H1 (cell line): ENCODE measurements at regions of chr2 and their contacts with region 1.

Region 1: GRCh38 chr2:233053928-233054784 is 6.0 kb upstream of the INPP5D start:
- DNase-seq: peak; percentile 41 to 94
- H3K4me3 ChIP-seq: no peak overlapping the region
- H3K27ac ChIP-seq: no peak overlapping the region
- H3K4me1 ChIP-seq: peaks cover 10 to 16% (median 14%) of the 10 kb centered on the region in 4 experiments
- H3K27me3 ChIP-seq: no peaks in the 10 kb centered on the region; a peak in 1 of 7 replicates
- CTCF ChIP-seq: peak; percentile 92 to 94 (median 93)
- EP300 ChIP-seq: no peak
- POLR2A ChIP-seq: no peak
- RAD21 ChIP-seq: peak; percentile 77 to 89

Region 2: GRCh38 chr2:232761301-232761907 is 292.8 kb before region 1 on chr2:
- CTCF ChIA-PET with region 1: no interaction called
- POLR2A ChIA-PET with region 1: no interaction called
- DNase-seq: no peak
- H3K4me3 ChIP-seq: no peak overlapping the region
- H3K27ac ChIP-seq: no peak overlapping the region
- H3K4me1 ChIP-seq: no peaks in the 10 kb centered on the region
- H3K27me3 ChIP-seq: no peaks in the 10 kb centered on the region
- CTCF ChIP-seq: peak in 2 of 3 experiments; percentile 30 to 36; a peak in 2 of 4 replicates
- EP300 ChIP-seq: no peak
- POLR2A ChIP-seq: no peak
- RAD21 ChIP-seq: peak; percentile 35 to 46

Region 3: GRCh38 chr2:232887171-232887850 is 166.8 kb before region 1 on chr2:
- CTCF ChIA-PET with region 1: interaction called, 12 read pairs
- POLR2A ChIA-PET with region 1: no interaction called
- DNase-seq: no peak
- H3K4me3 ChIP-seq: no peak overlapping the region
- H3K27ac ChIP-seq: no peak overlapping the region
- H3K4me1 ChIP-seq: peaks cover 0 to 16% (median 10%) of the 10 kb centered on the region in 4 experiments; a peak in 6 of 7 replicates
- H3K27me3 ChIP-seq: no peaks in the 10 kb centered on the region
- CTCF ChIP-seq: peak in 2 of 3 experiments; percentile 67 to 70; a peak in 3 of 4 replicates
- EP300 ChIP-seq: no peak
- POLR2A ChIP-seq: no peak
- RAD21 ChIP-seq: peak; percentile 63 to 78

Region 4: GRCh38 chr2:232999354-232999753 is 54.8 kb before region 1 on chr2:
- CTCF ChIA-PET with region 1: interaction called, 12 read pairs
- POLR2A ChIA-PET with region 1: no interaction called
- DNase-seq: no peak
- H3K4me3 ChIP-seq: no peak overlapping the region
- H3K27ac ChIP-seq: no peak overlapping the region
- H3K4me1 ChIP-seq: no peaks in the 10 kb centered on the region; a peak in 1 of 7 replicates
- H3K27me3 ChIP-seq: no peaks in the 10 kb centered on the region
- CTCF ChIP-seq: peak; percentile 9 to 52 (median 42); a peak in 3 of 4 replicates
- EP300 ChIP-seq: no peak
- POLR2A ChIP-seq: no peak
- RAD21 ChIP-seq: peak in 1 of 2 experiments; percentile 30; a peak in 2 of 4 replicates

Region 5: GRCh38 chr2:233033672-233034071 is 20.5 kb before region 1 on chr2:
- CTCF ChIA-PET with region 1: interaction called, 47 read pairs
- POLR2A ChIA-PET with region 1: interaction called, 10 read pairs
- DNase-seq: no peak
- H3K4me3 ChIP-seq: no peak overlapping the region
- H3K27ac ChIP-seq: no peak overlapping the region
- H3K4me1 ChIP-seq: peaks cover 0 to 6% (median 0%) of the 10 kb centered on the region in 4 experiments; a peak in 1 of 7 replicates
- H3K27me3 ChIP-seq: no peaks in the 10 kb centered on the region
- CTCF ChIP-seq: no peak
- EP300 ChIP-seq: no peak
- POLR2A ChIP-seq: no peak
- RAD21 ChIP-seq: no peak